Right cardiac atrium (tissue), 5 donors: ENCODE measurements at regions of chr16 and their contacts with region 1.

Region 1: GRCh38 chr16:25014500-25015147 is 545 bp downstream of the ARHGAP17 start:
- DNase-seq: peak; percentile 55 to 82 (median 80)
- ATAC-seq: peak; percentile 48 to 56
- H3K4me3 ChIP-seq: peak overlapping the region; percentile 85
- H3K27ac ChIP-seq: peak overlapping the region; percentile 87
- H3K4me1 ChIP-seq: peaks cover 16% of the 10 kb centered on the region
- H3K27me3 ChIP-seq: no peaks in the 10 kb centered on the region

Region 2: DNA sequence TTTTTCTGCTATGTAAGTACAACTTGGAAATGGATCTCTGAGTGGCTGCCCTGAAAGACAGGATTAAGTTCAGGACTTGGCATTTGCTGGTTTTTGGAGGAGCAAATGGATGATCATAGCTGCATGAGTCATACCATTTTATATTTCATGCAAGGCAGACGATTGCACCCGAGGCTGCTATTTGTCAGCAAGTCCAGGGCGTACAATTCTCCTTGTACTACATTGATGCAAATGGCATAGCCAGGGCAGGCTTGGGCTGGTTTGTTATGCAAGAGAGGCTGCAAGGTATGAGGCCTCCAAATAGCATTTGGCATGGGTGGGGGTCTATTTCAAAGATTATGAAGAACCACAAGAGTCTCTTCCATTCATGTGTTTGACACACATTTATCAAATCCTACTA is 839.6 kb before region 1 on chr16:
- intact Hi-C with region 1: no loop called
- DNase-seq: no peak
- ATAC-seq: no peak
- H3K4me3 ChIP-seq: no peak overlapping the region
- H3K27ac ChIP-seq: no peak overlapping the region
- H3K4me1 ChIP-seq: no peaks in the 10 kb centered on the region
- H3K27me3 ChIP-seq: no peaks in the 10 kb centered on the region

Region 3: GRCh38 chr16:24652209-24652712 is 362.4 kb before region 1 on chr16:
- intact Hi-C with region 1: no loop called
- DNase-seq: no peak
- ATAC-seq: no peak
- H3K4me3 ChIP-seq: no peak overlapping the region
- H3K27ac ChIP-seq: no peak overlapping the region
- H3K4me1 ChIP-seq: no peaks in the 10 kb centered on the region
- H3K27me3 ChIP-seq: no peaks in the 10 kb centered on the region

Region 4: GRCh38 chr16:24810951-24811843 is 203.4 kb before region 1 on chr16:
- intact Hi-C with region 1: no loop called
- DNase-seq: no peak
- ATAC-seq: no peak
- H3K4me3 ChIP-seq: no peak overlapping the region
- H3K27ac ChIP-seq: no peak overlapping the region
- H3K4me1 ChIP-seq: no peaks in the 10 kb centered on the region
- H3K27me3 ChIP-seq: no peaks in the 10 kb centered on the region

Region 5: GRCh38 chr16:24969071-24969470 is 45.6 kb before region 1 on chr16:
- intact Hi-C with region 1: loop called in 1 of 4 experiments (anchors 10 kb)
- DNase-seq: no peak
- ATAC-seq: peak; percentile 39 to 54
- H3K4me3 ChIP-seq: no peak overlapping the region
- H3K27ac ChIP-seq: no peak overlapping the region
- H3K4me1 ChIP-seq: peaks cover 11% of the 10 kb centered on the region
- H3K27me3 ChIP-seq: no peaks in the 10 kb centered on the region

Region 6: GRCh38 chr16:25126820-25127232 is 112.2 kb after region 1 on chr16:
- intact Hi-C with region 1: no loop called
- DNase-seq: no peak
- ATAC-seq: peak; percentile 37 to 48
- H3K4me3 ChIP-seq: no peak overlapping the region
- H3K27ac ChIP-seq: no peak overlapping the region
- H3K4me1 ChIP-seq: no peaks in the 10 kb centered on the region
- H3K27me3 ChIP-seq: no peaks in the 10 kb centered on the region